GM10248 (cell line): ENCODE measurements at regions of chr2 and their contacts with region 1.

Region 1: DNA sequence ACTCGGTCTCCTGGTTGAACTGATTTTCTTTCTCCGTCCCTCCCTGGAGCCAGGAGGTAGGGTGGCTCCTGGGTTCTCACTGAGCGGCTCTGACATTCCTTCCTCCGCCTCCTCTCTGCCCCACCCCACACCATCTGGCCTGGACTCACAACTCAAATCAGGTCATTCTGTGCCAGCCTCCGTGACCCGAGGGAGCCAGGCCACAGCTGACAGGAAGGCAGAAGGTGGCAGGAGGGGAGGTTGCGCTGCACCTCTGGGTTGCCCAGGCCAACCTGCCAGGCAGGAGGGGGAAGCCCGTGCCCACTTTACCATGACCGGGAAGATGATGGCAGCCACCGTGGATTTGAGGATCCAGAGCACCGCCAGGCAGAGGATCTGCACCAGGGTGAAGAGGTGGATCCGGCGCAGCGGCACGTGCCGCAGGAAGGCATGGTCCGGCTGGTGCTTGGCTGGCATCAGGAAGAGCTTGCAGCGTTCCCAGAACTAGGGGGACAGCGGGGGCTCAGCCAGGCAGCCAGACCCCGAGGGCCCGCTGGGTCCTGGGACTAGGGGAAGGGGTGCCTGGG is 28.3 kb downstream of the MTHFD2 start:
- DNase-seq: no peak
- CTCF ChIP-seq: no peak

Region 2: GRCh38 chr2:74216642-74217041 is 10.1 kb before region 1 on chr2:
- CTCF ChIA-PET with region 1: interaction called, 11 read pairs
- POLR2A ChIA-PET with region 1: no interaction called
- DNase-seq: no peak
- CTCF ChIP-seq: no peak

Region 3: DNA sequence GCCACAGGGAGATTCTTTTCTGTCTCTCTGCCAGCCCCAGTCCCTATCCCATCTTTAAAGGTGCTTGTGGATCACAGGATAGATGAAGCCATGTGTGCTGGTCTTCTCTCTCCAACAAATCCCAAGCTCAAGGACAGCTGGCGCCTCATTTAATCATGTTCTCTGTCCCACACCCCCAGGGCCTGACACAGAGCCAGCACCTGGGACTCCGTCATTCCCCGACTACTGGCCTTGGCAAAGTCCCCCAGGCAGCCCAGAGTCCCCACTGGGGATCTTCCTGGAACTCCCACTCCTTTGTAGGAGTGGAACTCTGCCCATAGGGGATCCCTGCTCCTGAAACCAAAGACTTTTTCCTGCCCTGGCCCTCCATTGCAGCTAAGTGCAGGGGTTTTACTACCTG is 32.5 kb after region 1 on chr2:
- CTCF ChIA-PET with region 1: no interaction called
- POLR2A ChIA-PET with region 1: no interaction called
- DNase-seq: no peak
- CTCF ChIP-seq: no peak